Heart right ventricle (tissue), 16 donors: ENCODE measurements at regions of chr6 and their contacts with region 1.

Region 1: DNA sequence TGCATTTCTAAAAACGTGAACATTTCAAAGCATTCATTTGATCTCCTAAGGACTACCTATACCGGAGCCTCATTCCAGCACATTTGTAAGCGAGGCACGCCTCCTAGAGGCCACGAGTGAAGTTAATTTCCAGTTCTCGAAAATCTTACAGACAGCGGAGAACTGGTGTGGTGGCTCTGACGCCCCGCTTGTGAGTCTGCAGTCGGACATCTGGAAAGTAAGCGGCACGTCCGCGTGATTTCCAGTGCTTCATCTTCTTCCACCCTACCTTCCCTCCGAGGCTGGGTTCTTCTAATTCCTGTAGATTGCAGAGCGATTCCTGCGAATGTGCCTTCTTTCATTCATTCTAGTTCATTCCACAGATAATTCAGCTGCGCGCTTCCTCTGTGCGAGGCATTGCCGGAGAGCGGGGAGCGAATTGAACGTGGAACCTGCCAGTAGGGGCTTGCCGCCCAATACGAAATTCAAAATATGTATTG is 810 bp upstream of the PRIM2 start:
- DNase-seq: peak; percentile 74 to 80
- ATAC-seq: peak; percentile 91 to 97 (median 94)
- H3K4me3 ChIP-seq: peak overlapping the region; percentile 50 to 94 (median 64)
- H3K27ac ChIP-seq: peak overlapping the region; percentile 14 to 75 (median 56)
- H3K4me1 ChIP-seq: peaks cover 4 to 28% (median 17%) of the 10 kb centered on the region in 9 donors
- H3K27me3 ChIP-seq: no peaks in the 10 kb centered on the region
- CTCF ChIP-seq: peak; percentile 58 to 92 (median 81)

Region 2: GRCh38 chr6:56902641-56903464 is 413.8 kb before region 1 on chr6:
- intact Hi-C with region 1: loop called (anchors 1 to 5 kb)
- DNase-seq: peak in 1 of 2 donors; percentile 9
- ATAC-seq: peak in 6 of 8 donors; percentile 42 to 74 (median 56)
- H3K4me3 ChIP-seq: peak overlapping the region in 1 of 10 donors; percentile 8
- H3K27ac ChIP-seq: no peak overlapping the region
- H3K4me1 ChIP-seq: peaks cover 0 to 5% (median 0%) of the 10 kb centered on the region in 9 donors
- H3K27me3 ChIP-seq: no peaks in the 10 kb centered on the region
- CTCF ChIP-seq: peak; percentile 53 to 84 (median 74)

Region 3: DNA sequence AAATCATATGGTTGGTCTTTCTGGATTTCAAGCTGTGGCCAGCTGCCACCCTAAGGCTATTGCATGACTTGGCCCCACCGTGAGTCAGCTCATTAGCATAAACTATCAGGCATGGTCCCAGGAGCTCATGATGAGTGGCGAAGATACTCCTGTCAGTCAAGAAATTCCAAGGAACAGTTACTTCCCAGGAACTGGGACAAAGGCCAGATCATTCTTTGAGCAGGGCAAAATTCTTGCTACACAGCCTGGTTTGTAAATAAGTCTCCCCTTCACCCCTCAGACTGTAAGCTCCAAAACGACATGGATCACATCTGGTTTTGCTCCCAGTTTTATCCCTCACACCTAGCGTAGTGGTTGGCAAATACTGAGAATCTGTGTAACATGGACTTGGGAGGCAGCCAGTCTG is 303.1 kb before region 1 on chr6:
- intact Hi-C with region 1: loop called in 3 of 10 experiments (anchors 10 kb)
- DNase-seq: no peak
- ATAC-seq: no peak
- H3K4me3 ChIP-seq: no peak overlapping the region
- H3K27ac ChIP-seq: no peak overlapping the region
- H3K4me1 ChIP-seq: no peaks in the 10 kb centered on the region
- H3K27me3 ChIP-seq: no peaks in the 10 kb centered on the region
- CTCF ChIP-seq: no peak

Region 4: GRCh38 chr6:57089687-57090460 is 226.7 kb before region 1 on chr6 and contains the start of gene ZNF451:
- intact Hi-C with region 1: loop called in 1 of 10 experiments (anchors 10 kb)
- DNase-seq: peak; percentile 98 to 99
- ATAC-seq: peak; percentile 98 to 99 (median 99)
- H3K4me3 ChIP-seq: peak within 1 kb of the TSS; percentile 40 to 76 (median 66)
- H3K27ac ChIP-seq: peak within 1 kb of the TSS; percentile 57 to 93 (median 86)
- H3K4me1 ChIP-seq: peaks cover 5 to 41% (median 37%) of the 10 kb centered on the region in 9 donors
- H3K27me3 ChIP-seq: no peaks in the 10 kb centered on the region
- CTCF ChIP-seq: peak in 2 of 9 donors; percentile 9 to 18
- total RNA-seq, gene ZNF451: 19.8 to 33.2 (median 26.8) TPM

Region 5: GRCh38 chr6:57190140-57190539 is 126.5 kb before region 1 on chr6:
- intact Hi-C with region 1: loop called in 3 of 10 experiments (anchors 5 to 10 kb)
- DNase-seq: no peak
- ATAC-seq: peak in 3 of 8 donors; percentile 42 to 46 (median 44)
- H3K4me3 ChIP-seq: no peak overlapping the region
- H3K27ac ChIP-seq: no peak overlapping the region
- H3K4me1 ChIP-seq: no peaks in the 10 kb centered on the region
- H3K27me3 ChIP-seq: no peaks in the 10 kb centered on the region
- CTCF ChIP-seq: peak in 8 of 9 donors; percentile 29 to 53 (median 40)

Region 6: GRCh38 chr6:57242505-57242904 is 74.1 kb before region 1 on chr6:
- intact Hi-C with region 1: no loop called
- DNase-seq: no peak
- ATAC-seq: peak in 5 of 8 donors; percentile 26 to 87 (median 64)
- H3K4me3 ChIP-seq: no peak overlapping the region
- H3K27ac ChIP-seq: peak overlapping the region in 2 of 10 donors; percentile 23 to 44
- H3K4me1 ChIP-seq: peaks cover 0 to 5% (median 0%) of the 10 kb centered on the region in 9 donors
- H3K27me3 ChIP-seq: no peaks in the 10 kb centered on the region
- CTCF ChIP-seq: no peak